ENCODE measurements at regions of chr16 and their contacts with region 1.

Region 1: DNA sequence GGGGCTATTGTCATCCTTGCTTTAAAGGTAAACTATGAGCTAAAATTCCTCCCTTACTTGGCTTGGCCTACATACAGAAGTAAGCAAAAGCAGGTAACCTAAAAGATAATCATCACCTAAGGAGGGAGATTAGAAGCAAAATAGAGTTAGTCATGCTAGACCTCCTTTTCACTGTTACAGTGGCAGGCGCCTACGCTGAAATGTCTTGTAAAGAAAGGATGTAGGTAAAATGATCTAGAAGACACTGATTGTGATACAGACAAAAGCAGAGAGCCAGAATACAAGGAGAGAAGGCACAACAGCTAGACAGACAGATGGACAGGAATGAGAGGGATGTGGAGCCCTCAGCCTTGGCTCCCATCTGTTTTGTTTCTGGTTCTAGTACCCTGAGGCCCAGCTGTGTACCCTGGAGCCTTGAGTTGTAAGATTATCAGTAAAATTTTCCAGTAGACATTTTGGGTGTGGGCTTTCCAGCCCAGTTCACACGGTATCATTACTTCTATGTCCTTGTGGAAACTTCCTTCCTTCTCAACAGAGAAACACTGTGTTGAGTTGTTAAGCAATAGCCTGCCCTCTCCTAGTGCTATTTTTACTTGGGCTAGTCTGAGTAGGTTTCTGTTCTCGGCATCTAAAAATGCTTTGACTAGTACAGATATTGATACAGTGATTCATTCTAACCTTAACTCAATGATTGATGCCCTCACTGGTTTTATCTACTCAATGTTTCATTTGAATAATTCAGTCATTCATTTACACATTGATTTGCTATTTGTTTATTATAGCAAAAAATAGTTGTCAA is 7.7 kb upstream of the C16orf78 start:
- DNase-seq: no peak
- ATAC-seq: no peak
- H3K4me3 Mint-ChIP-seq: no peak overlapping the region
- H3K27ac Mint-ChIP-seq: no peak overlapping the region
- H3K4me1 Mint-ChIP-seq: no peaks in the 10 kb centered on the region
- H3K27me3 Mint-ChIP-seq: peaks cover 7% of the 10 kb centered on the region

Region 2: DNA sequence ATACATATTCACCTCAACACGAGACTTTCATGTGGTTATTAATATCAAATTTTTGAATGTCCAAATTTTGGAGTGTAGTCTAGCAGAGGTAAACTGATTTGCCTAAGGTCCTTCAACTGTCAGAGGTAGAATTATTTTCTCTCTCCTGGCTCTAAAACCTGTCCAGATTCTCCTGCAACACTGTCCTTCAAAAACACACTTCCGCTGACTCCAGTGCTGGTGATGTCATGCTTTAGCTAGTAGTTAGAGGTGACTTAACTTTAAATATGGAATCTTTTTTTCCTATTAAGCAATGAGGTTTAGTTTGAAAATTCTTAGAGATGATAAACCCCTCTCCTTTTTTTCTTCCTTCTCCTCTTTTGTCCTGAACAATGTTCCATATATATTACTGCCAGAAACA is 73.5 kb before region 1 on chr16:
- CTCF ChIA-PET with region 1: no interaction called
- POLR2A ChIA-PET with region 1: no interaction called
- intact Hi-C with region 1: no loop called
- DNase-seq: no peak
- ATAC-seq: no peak
- H3K4me3 Mint-ChIP-seq: no peak overlapping the region
- H3K27ac Mint-ChIP-seq: no peak overlapping the region
- H3K4me1 Mint-ChIP-seq: no peaks in the 10 kb centered on the region
- H3K27me3 Mint-ChIP-seq: peaks cover 16% of the 10 kb centered on the region

Region 3: DNA sequence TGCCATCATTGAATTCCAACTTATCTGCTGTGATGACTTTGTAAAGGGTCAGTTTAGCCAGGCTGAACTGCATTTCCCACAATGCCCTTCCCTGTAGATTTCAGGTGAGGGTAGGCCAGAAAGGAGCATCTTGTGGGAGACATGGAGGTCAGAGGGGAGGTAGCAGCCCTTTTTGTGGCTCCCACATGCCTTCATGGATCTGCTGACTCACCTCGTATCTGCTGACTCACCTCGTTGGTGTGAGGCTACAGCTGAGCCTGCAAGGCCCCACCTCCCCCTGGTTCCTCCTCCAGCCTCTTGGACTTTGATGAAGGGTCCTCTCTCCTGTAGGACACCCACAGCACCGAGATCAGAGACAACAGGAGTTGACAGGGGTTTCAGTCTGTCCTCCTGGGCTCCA is 1682.6 kb after region 1 on chr16:
- CTCF ChIA-PET with region 1: no interaction called
- POLR2A ChIA-PET with region 1: interaction called, 10 read pairs
- intact Hi-C with region 1: no loop called
- DNase-seq: no peak
- ATAC-seq: no peak
- H3K4me3 Mint-ChIP-seq: no peak overlapping the region
- H3K27ac Mint-ChIP-seq: no peak overlapping the region
- H3K4me1 Mint-ChIP-seq: no peaks in the 10 kb centered on the region
- H3K27me3 Mint-ChIP-seq: peaks cover 6% of the 10 kb centered on the region